ENCODE measurements at regions of chr19 and their contacts with region 1.

Region 1: DNA sequence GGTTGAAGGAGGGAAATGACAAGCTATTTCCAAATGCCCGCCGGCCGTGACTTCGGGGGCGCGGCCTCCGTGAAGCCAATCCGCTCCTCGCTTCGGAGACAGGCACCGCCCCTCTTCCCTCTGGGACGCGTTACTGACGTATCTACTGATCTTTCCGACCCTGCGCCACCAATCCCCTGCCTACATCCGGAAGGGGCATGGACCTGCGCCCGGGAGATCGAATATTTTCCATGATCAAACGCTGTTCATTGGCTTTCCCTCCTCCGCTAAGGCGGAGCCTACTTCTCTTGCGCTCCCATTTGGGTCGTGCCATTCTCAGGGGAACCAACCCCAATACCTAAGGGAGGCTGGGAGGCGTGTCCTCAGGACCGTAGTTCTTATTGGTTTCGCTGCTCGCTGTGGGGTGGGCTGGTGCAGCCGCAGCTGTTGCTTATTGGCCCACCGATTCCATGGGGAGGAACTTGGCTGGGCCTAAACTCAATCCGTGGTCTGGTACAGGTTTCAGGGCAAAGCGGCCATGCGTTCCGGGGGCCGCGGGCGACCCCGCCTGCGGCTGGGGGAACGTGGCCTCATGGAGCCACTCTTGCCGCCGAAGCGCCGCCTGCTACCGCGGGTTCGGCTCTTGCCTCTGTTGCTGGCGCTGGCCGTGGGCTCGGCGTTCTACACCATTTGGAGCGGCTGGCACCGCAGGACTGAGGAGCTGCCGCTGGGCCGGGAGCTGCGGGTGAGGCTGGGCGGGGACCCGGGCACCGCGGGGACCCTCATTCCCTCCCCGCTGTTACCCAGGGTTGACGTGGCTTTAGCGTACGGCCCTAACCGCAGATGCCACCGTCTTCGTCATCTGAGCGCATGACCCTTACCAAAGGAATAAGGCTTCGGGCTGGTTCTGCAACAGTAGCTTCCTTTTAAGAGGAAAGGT is at the start of gene QPCTL:
- DNase-seq: peak; percentile 99
- ATAC-seq: peak; percentile 91
- H3K4me3 ChIP-seq: peak within 1 kb of the TSS; percentile 86 to 98
- H3K27ac ChIP-seq: peak within 1 kb of the TSS; percentile 79
- H3K4me1 ChIP-seq: peaks cover 3 to 13% of the 10 kb centered on the region in 2 experiments; a peak in 3 of 4 replicates
- H3K27me3 ChIP-seq: no peaks in the 10 kb centered on the region
- CTCF ChIP-seq: no peak
- POLR2A ChIP-seq: peak; percentile 61
- RAD21 ChIP-seq: no peak
- total RNA-seq, gene QPCTL: 19.5 TPM

Region 2: DNA sequence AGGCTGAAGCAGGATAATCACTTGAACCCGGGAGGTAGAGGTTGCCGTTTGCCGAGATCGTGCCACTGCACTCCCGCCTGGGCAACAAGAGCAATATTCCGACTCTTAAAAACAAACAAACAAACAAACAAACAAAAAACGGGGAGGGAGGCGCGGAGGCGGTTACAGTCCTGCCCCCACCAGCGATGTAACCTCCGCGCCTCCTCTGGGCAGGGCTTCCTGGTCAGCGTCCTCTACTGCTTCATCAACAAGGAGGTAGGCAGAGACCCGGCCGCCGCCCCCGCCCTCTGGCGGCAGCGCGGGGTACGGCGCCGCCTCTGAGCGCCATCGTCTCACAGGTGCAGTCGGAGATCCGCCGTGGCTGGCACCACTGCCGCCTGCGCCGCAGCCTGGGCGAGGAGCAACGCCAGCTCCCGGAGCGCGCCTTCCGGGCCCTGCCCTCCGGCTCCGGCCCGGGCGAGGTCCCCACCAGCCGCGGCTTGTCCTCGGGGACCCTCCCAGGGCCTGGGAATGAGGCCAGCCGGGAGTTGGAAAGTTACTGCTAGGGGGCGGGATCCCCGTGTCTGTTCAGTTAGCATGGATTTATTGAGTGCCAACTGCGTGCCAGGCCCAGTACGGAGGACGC is 10.9 kb before region 1 on chr19:
- CTCF ChIA-PET with region 1: interaction called, 22 read pairs
- POLR2A ChIA-PET with region 1: interaction called, 19 read pairs
- RAD21 ChIA-PET with region 1: no interaction called
- intact Hi-C with region 1: no loop called
- DNase-seq: peak; percentile 71
- ATAC-seq: peak; percentile 74
- H3K4me3 ChIP-seq: peak overlapping the region; percentile 28 to 56
- H3K27ac ChIP-seq: peak overlapping the region; percentile 82
- H3K4me1 ChIP-seq: peaks cover 17 to 35% of the 10 kb centered on the region in 2 experiments
- H3K27me3 ChIP-seq: no peaks in the 10 kb centered on the region
- CTCF ChIP-seq: peak; percentile 78 to 95 (median 89)
- POLR2A ChIP-seq: no peak
- RAD21 ChIP-seq: peak; percentile 71

Region 3: DNA sequence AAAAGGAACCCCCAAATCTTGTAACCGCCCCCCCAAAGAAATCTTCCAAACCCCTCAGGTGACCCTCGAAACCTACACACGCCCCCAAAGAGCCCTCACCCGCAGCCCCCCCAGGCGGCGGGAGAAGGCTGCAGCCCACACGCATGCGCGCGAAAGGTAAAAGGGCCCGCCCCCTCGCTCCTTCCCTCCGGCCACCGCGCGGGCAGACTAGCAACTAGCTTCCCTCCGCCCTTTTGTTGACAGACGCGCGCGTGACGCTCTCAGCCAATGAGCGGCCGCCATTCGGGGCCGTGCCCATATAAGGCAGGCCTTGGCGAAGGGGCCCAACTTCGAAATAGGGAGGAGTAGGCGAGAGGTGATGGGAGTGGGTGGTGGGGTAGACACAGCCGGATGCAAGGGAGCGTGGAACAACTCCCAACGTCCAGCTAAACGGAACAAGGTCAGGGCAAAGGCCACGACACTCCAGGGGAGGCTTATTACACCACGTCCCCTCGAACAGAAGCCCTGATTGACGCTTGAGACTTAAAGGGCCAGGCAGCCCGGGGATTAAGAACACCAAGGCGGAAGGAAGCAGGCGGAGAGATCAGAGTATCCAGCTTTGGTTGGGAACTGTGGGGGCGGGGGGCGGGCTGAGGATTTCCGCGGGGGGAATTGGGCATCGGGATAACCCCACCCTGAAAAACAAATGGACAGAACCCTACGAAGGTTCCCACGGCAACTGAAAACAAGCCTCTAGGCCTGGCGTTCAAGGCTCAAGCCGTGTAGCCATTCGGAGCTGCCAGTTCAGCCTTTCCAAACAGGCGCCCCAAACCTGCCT is 24.9 kb after region 1 on chr19:
- CTCF ChIA-PET with region 1: interaction called, 22 read pairs
- POLR2A ChIA-PET with region 1: interaction called, 10 read pairs
- RAD21 ChIA-PET with region 1: interaction called in 1 of 2 experiments, 4 read pairs
- intact Hi-C with region 1: no loop called
- DNase-seq: peak; percentile 96
- ATAC-seq: peak; percentile 92
- H3K4me3 ChIP-seq: peak overlapping the region; percentile 52 to 64
- H3K27ac ChIP-seq: peak overlapping the region; percentile 58
- H3K4me1 ChIP-seq: peaks cover 40 to 52% of the 10 kb centered on the region in 2 experiments
- H3K27me3 ChIP-seq: no peaks in the 10 kb centered on the region
- CTCF ChIP-seq: 0 out of 6 replicates have a peak, but pooled peaks of 1 of the 3 experiments have one; percentile 8
- POLR2A ChIP-seq: no peak
- RAD21 ChIP-seq: no peak

Region 4: GRCh38 chr19:45785781-45786532 is 93.5 kb after region 1 on chr19:
- CTCF ChIA-PET with region 1: no interaction called
- POLR2A ChIA-PET with region 1: no interaction called
- RAD21 ChIA-PET with region 1: no interaction called
- intact Hi-C with region 1: no loop called
- DNase-seq: no peak
- ATAC-seq: no peak
- H3K4me3 ChIP-seq: no peak overlapping the region
- H3K27ac ChIP-seq: no peak overlapping the region
- H3K4me1 ChIP-seq: peaks cover 25 to 37% of the 10 kb centered on the region in 2 experiments
- H3K27me3 ChIP-seq: no peaks in the 10 kb centered on the region
- CTCF ChIP-seq: no peak
- POLR2A ChIP-seq: no peak
- RAD21 ChIP-seq: no peak